ENCODE measurements at regions of chr1 and their contacts with region 1.

Region 1: GRCh38 chr1:154479764-154480421 is 22.1 kb upstream of the TDRD10 start:
- DNase-seq: peak; percentile 85
- ATAC-seq: peak; percentile 93
- H3K4me3 ChIP-seq: no peak overlapping the region
- H3K27ac ChIP-seq: no peak overlapping the region
- H3K4me1 ChIP-seq: peaks cover 3% of the 10 kb centered on the region
- H3K27me3 ChIP-seq: peaks cover 5% of the 10 kb centered on the region; the same call in 1 of the 2 replicates
- CTCF ChIP-seq: peak; percentile 98
- POLR2A ChIP-seq: peak; percentile 40; the same call in 1 of the 2 replicates
- RAD21 ChIP-seq: peak; percentile 93

Region 2: DNA sequence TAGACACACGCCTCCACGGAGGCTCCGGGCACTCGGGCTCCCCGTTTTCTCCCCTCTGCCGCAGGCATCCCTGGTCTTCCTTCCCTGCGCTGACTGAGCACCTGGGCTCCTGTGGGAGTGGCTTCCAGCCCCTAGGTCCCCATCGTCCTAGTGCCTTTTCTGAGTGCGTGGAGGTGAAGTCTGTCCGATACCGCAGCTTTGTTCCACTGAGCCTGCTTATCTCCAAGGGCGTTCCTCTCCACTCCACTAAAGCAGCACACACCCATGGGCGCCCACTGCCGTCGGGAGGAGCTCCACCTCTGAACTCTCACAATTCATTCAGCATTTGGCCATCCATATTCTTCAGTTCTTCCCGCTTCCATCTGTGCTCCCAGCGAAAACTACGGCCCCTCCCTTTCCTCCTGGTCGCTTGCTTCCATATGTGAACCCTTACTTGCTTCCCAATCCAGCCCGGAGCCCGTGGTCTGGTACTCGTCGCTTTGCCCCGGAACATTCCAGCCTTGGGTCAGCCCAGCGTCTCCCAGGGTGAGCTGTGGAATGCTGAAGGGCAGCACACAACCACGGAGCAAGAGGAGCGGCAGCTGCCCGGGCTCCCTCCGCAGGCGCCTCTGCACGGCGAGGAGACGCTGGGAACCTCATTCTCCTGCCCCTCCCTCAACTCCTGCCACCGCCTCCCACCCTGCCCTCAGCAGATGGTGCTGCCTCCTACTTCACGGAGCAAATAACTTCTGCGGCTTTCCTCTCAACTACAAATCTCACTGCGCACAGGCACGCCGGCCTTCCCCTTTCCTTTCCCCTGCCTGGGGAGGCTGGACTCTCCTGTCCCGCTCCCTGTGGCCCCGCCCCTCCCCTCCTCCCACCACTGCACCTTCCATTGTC is 127.1 kb before region 1 on chr1:
- CTCF ChIA-PET with region 1: no interaction called
- POLR2A ChIA-PET with region 1: interaction called, 4 read pairs
- dilution Hi-C with region 1: no loop called
- in situ Hi-C with region 1: no loop called
- intact Hi-C with region 1: loop called (anchors 5 kb)
- DNase-seq: peak; percentile 31
- ATAC-seq: peak; percentile 78
- H3K4me3 ChIP-seq: peak overlapping the region; percentile 4; the same call in 1 of the 2 replicates
- H3K27ac ChIP-seq: peak overlapping the region; percentile 26; the same call in 1 of the 2 replicates
- H3K4me1 ChIP-seq: peaks cover 10% of the 10 kb centered on the region; the same call in 1 of the 2 replicates
- H3K27me3 ChIP-seq: peaks cover 2% of the 10 kb centered on the region
- CTCF ChIP-seq: no peak
- POLR2A ChIP-seq: no peak
- RAD21 ChIP-seq: no peak

Region 3: GRCh38 chr1:154546264-154547063 is 66.6 kb after region 1 on chr1:
- CTCF ChIA-PET with region 1: interaction called, 14 read pairs
- POLR2A ChIA-PET with region 1: no interaction called
- dilution Hi-C with region 1: no loop called
- in situ Hi-C with region 1: loop called (anchors 5 kb)
- intact Hi-C with region 1: loop called (anchors 1 kb)
- DNase-seq: peak; percentile 58
- ATAC-seq: peak; percentile 97
- H3K4me3 ChIP-seq: no peak overlapping the region
- H3K27ac ChIP-seq: no peak overlapping the region
- H3K4me1 ChIP-seq: no peaks in the 10 kb centered on the region
- H3K27me3 ChIP-seq: peaks cover 32% of the 10 kb centered on the region
- CTCF ChIP-seq: peak; percentile 79
- POLR2A ChIP-seq: no peak
- RAD21 ChIP-seq: peak; percentile 89

Region 4: DNA sequence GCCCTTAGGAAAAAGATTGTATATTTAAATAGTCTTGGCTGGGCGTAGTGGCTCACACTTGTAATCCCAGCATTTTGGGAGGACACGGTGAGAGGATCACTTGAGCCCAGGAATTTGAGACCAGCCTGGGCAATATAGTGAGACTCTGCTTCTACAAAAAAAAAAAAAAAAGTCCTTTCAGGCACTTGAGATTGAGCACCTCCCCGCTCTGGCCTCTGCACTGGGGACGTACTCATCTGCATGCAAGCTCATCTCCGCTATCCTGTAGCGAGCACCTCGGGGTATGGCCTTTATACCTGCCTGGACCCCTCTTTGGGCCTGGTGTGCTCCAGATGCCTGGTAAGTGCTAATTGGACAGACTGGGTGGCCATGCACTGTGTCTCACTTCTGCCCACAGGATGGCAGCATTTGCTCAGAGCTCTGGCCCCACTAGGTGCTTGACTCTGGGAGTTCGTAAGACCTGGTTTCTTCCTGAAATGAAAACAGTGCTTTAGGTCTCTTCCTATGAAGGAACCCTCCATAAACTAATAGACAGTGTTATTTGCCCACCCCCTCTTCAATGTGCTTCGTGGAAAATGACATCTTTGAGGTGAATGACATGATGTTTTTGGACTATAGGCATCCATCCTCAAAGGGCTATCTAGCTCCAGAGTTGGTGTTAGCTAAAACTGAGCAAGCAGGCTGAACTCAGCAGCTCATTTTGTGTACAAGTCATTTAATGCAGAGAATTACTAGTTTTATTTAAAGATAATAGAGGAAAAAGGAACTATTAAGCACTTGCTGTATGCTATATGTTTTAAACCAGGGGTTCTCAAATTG is 189.8 kb after region 1 on chr1:
- CTCF ChIA-PET with region 1: no interaction called
- POLR2A ChIA-PET with region 1: no interaction called
- dilution Hi-C with region 1: no loop called
- in situ Hi-C with region 1: no loop called
- intact Hi-C with region 1: loop called (anchors 5 kb)
- DNase-seq: peak; percentile 69
- ATAC-seq: peak; percentile 99
- H3K4me3 ChIP-seq: no peak overlapping the region
- H3K27ac ChIP-seq: no peak overlapping the region
- H3K4me1 ChIP-seq: no peaks in the 10 kb centered on the region
- H3K27me3 ChIP-seq: peaks cover 24% of the 10 kb centered on the region
- CTCF ChIP-seq: peak; percentile 78
- POLR2A ChIP-seq: no peak
- RAD21 ChIP-seq: peak; percentile 88

Region 5: DNA sequence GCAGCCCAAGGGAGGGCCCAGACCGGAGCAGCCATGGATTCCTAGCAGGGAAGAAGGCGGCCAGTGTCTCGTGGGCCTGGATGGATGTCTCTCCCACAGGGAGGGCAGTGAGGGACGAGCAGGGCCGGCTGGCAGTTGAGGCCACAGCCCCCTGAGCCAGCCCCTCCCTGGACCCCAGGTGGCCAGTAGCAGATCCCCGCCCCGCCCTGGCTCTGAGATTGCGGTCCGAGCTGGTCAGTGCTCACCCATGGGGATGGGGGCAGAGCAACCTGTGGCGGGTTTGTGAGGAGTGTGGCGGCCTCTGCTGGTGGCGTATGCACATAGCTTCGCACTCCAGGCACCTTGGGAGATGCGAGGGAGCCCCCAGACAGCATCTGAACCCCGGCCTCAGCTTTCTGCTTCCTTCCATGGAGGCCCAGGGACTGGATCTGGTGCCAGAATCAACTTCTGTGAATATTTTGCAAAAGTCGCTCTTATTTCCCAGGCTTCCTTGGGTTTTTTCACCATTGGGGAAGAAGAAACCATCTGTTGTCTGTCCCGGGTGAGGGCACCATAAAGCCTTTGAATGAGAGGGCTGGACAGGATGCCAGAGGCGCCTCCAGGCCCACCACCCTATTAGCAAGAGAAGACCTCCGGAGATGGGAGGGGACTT is 398.6 kb after region 1 on chr1:
- CTCF ChIA-PET with region 1: interaction called, 3 read pairs
- POLR2A ChIA-PET with region 1: no interaction called
- dilution Hi-C with region 1: no loop called
- in situ Hi-C with region 1: loop called (anchors 5 kb)
- intact Hi-C with region 1: loop called (anchors 1 kb)
- DNase-seq: peak; percentile 62
- ATAC-seq: peak; percentile 99
- H3K4me3 ChIP-seq: no peak overlapping the region
- H3K27ac ChIP-seq: no peak overlapping the region
- H3K4me1 ChIP-seq: peaks cover 1% of the 10 kb centered on the region; the same call in 1 of the 2 replicates
- H3K27me3 ChIP-seq: peaks cover 64% of the 10 kb centered on the region
- CTCF ChIP-seq: peak; percentile 84
- POLR2A ChIP-seq: no peak
- RAD21 ChIP-seq: peak; percentile 94

Region 6: DNA sequence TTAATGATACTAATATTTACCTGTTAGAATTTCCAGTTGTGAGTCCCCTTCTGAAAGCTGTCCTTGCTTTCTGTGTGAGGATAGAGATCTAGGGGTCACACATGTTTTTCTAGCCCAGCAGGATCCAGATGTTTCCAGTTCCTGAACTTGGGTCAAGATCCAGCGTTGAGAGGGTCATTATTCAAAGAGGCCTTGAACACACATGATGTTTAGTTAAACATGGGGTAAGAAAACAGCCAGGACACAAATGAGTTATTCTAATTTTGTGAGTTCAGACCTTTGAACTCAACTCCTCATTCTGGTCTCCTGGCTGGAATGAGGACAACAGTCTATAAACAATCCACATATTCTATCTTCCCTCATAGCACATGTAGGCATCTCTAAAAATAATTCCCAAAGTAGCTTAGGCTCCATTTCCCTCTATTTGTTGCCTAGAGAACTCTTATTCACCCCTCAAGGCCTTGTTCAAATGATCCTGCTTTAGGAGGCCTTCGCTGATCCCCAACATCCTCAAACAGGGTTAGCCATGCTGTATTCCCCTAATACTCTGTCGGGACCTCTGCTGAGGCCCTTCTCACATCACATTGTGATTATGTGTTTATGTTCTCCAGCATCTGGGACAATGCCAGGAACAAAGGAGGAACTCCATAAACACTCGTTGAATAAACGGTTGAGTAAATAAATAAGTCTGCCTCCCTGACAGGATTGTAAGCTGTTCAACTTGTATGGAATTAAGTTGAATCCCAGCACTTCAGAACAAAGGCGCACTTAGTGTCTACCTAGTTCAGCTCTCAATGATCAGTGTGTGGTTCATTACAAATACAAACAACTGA is 405.2 kb after region 1 on chr1:
- CTCF ChIA-PET with region 1: no interaction called
- POLR2A ChIA-PET with region 1: no interaction called
- dilution Hi-C with region 1: no loop called
- in situ Hi-C with region 1: loop called (anchors 5 kb)
- intact Hi-C with region 1: no loop called
- DNase-seq: no peak
- ATAC-seq: no peak
- H3K4me3 ChIP-seq: no peak overlapping the region
- H3K27ac ChIP-seq: no peak overlapping the region
- H3K4me1 ChIP-seq: no peaks in the 10 kb centered on the region
- H3K27me3 ChIP-seq: peaks cover 79% of the 10 kb centered on the region
- CTCF ChIP-seq: no peak
- POLR2A ChIP-seq: no peak
- RAD21 ChIP-seq: no peak

Region 7: DNA sequence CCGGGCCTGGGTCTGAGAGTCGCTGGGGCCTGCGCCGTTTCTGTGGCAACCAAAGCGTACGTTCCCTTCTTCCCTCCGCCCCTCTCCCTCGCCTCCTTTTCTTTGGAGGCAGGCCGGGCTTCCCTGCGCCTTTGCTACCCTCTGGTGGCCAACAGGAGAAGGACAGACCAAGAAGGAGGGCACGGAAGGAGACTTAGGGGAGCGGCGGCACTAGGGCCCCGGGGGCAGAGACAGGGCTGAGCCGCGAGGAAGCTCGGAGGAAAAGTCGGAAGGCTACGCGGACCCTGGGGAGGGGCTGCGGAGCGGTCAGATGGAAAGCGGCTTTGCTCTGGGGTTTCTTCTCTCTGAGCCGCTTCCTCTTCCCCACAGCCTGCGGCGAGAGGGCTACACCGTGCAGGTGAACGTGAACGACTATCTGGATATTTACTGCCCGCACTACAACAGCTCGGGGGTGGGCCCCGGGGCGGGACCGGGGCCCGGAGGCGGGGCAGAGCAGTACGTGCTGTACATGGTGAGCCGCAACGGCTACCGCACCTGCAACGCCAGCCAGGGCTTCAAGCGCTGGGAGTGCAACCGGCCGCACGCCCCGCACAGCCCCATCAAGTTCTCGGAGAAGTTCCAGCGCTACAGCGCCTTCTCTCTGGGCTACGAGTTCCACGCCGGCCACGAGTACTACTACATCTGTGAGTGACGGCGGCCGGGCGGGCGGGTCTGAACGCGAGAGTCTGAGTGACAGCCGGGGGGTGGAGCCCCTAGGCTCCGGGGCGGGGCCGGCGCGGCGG is 605.0 kb after region 1 on chr1:
- CTCF ChIA-PET with region 1: no interaction called
- POLR2A ChIA-PET with region 1: no interaction called
- dilution Hi-C with region 1: no loop called
- in situ Hi-C with region 1: no loop called
- intact Hi-C with region 1: loop called (anchors 10 kb)
- DNase-seq: peak; percentile 91
- ATAC-seq: peak; percentile 87
- H3K4me3 ChIP-seq: peak overlapping the region; percentile 76
- H3K27ac ChIP-seq: peak overlapping the region; percentile 60
- H3K4me1 ChIP-seq: peaks cover 5% of the 10 kb centered on the region; the same call in 1 of the 2 replicates
- H3K27me3 ChIP-seq: peaks cover 43% of the 10 kb centered on the region
- CTCF ChIP-seq: peak; percentile 99
- POLR2A ChIP-seq: no peak
- RAD21 ChIP-seq: peak; percentile 97